HepG2 (cell line): ENCODE measurements at regions of chr2 and their contacts with region 1.

Region 1: DNA sequence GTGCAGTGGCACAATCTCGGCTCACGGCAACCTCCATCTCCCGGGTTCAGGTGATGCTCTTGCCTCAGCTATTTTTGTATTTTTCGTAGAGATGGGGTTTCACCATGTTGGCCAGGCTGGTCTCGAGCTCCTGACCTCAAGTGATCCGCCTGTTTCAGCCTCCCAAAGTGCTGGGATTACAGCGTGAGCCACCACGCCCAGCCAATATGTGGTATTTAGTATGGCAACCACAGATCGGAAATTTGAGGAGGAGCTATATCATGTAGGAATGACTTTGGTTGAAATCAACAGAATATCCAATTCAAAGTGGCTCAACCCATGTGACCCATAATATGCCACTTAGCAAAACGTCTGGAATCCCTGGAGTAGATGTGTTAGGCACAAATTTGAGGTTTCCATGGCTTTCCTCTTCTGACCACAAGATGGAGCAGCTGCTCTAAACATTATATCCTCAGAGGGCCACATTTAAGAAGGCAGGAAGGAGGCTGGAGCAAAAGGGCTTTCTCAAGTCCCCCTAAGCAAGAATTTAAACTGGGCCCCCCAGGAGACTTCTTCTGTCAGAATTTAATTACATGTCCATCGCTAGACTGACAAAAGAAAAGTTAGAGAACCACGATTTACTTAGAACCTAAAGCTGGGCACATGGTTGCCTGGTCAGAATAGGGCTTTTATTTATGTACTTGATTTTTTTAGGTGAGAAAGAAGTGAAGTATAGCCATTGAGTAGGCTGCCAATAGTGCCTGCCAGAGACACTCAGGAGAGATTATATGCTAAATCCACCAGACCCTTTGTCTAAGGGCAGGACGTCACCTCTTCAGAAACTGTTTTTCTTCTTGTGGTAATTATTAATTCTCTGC is 49.6 kb upstream of the ITSN2 start:
- DNase-seq: peak; percentile 71
- ATAC-seq: peak; percentile 89
- H3K4me3 ChIP-seq: no peak overlapping the region
- H3K27ac ChIP-seq: no peak overlapping the region
- H3K4me1 ChIP-seq: 0 out of 2 replicates have a peak, but pooled peaks cover 4% of the 10 kb centered on the region
- H3K27me3 ChIP-seq: no peaks in the 10 kb centered on the region
- CTCF ChIP-seq: peak; percentile 90
- EP300 ChIP-seq: no peak
- POLR2A ChIP-seq: no peak
- RAD21 ChIP-seq: peak; percentile 65

Region 2: GRCh38 chr2:24421668-24422067 is 11.7 kb after region 1 on chr2:
- CTCF ChIA-PET with region 1: no interaction called
- POLR2A ChIA-PET with region 1: no interaction called
- in situ Hi-C with region 1: no loop called
- intact Hi-C with region 1: no loop called
- DNase-seq: peak; percentile 52
- ATAC-seq: peak; percentile 88
- H3K4me3 ChIP-seq: no peak overlapping the region
- H3K27ac ChIP-seq: no peak overlapping the region
- H3K4me1 ChIP-seq: peaks cover 6% of the 10 kb centered on the region; the same call in 1 of the 2 replicates
- H3K27me3 ChIP-seq: 0 out of 5 replicates have a peak, but pooled peaks cover 0 to 4% of the 10 kb centered on the region in 2 experiments
- CTCF ChIP-seq: peak; percentile 82
- EP300 ChIP-seq: no peak
- POLR2A ChIP-seq: no peak
- RAD21 ChIP-seq: no peak; the same call in 1 of the 2 replicates

Region 3: DNA sequence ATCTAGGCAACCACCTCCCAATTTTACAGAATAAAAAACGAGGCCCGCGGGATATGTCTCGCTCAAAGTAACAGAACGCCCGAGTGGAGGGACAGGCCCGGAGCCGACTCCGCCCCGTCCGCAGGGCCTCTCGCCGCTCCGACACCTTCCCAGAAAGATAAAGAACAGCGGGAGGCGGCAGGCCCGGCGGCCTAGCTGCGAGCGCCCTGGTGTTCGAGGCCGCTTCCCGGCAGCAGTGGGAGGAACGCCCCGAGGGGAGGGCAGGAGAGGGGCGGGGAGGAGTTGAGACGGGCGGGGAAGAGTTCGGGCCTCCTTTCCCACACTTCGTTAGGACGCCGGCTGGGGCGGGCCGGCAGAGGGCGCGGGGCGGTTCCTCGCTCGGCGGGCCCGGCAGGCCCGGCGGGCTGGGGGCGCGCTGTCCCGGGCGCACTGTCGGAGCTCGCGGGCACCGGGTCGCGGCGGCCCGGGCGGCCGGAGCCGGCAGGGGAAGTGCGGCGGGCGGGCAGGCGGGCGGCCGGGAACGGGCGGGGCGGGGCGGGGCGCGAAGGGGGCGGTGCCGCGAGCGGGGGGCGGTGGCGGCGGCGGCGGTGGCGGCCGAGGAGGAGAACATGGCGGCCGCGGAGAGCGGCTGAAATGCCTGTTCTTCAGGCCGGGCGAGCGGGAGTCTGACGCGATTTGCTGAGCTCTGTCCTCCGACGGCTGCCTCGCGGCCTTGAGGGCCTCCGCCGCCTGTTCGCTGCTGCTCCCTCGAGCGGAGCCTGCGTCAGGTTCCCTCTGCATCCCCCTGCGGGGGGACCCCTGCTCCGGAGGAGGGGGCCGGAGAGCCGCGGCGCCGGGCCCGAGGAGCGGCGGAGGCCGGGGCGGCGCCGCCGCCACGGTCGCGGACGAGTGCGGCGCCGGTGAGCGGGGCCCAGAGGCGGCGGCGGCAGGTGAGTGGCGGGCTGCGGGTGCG is 81.0 kb after region 1 on chr2 and contains the start of gene NCOA1:
- CTCF ChIA-PET with region 1: no interaction called
- POLR2A ChIA-PET with region 1: no interaction called
- in situ Hi-C with region 1: no loop called
- intact Hi-C with region 1: loop called (anchors 5 kb)
- DNase-seq: peak; percentile 75
- ATAC-seq: peak; percentile 82
- H3K4me3 ChIP-seq: peak within 1 kb of the TSS; percentile 80 to 90 (median 89)
- H3K27ac ChIP-seq: peak within 1 kb of the TSS; percentile 58
- H3K4me1 ChIP-seq: peaks cover 49% of the 10 kb centered on the region
- H3K27me3 ChIP-seq: peaks cover 0 to 10% of the 10 kb centered on the region in 2 experiments; a peak in 2 of 5 replicates
- CTCF ChIP-seq: no peak; the same call in 1 of the 2 replicates
- EP300 ChIP-seq: no peak
- POLR2A ChIP-seq: peak; percentile 77 to 84
- RAD21 ChIP-seq: no peak
- total RNA-seq, gene NCOA1: 10.0 and 10.5 TPM in 2 replicates

Region 4: DNA sequence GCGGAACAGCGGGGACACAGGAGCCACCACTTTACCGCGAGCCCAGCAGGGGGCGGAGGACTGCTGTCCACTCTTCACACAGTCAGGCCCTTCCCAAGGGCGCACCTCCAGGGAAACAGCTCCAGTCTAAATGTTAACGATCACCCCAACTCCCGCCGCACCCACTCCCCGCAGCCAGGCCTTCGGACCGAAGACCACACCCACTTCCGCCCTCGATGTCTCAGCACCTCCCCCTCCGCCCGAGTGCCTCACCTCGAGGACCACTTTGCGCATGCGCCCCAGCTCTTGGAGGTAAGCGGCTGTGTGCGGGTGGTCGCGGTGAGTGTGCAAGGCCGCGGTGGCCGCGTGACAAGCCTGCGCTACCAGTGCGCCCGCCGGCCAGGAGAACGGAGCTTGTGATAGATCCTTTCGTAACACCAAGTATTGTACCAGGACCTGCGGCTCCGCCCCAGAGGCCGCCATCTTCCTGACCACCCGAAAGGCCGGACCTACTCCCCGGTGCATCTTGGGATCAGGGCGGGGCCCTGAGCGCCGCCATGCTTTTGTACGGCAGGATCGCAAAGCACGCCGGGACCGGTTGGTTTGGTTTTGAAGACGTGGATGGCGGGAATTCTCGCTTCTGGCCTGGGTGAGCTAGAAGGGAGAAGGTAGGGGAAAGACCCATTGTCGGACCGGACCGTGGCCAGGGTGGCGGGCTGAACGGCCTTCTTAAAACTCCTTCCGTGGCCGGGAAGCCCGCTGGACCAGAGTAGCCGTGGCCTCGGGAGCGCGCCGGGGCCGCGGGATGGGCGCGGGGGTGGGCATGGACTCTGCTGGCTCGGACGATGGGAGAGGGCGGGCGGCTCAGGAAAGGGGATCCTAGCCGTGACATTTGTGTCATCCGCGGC is 383.2 kb after region 1 on chr2 and contains the starts of genes CENPO and PTRHD1:
- CTCF ChIA-PET with region 1: interaction called, 4 read pairs
- POLR2A ChIA-PET with region 1: no interaction called
- in situ Hi-C with region 1: no loop called
- intact Hi-C with region 1: loop called (anchors 1 kb)
- DNase-seq: peak; percentile 98
- ATAC-seq: peak; percentile 93
- H3K4me3 ChIP-seq: peak within 1 kb of the TSS; percentile 85 to 95 (median 86)
- H3K27ac ChIP-seq: peak within 1 kb of the TSS; percentile 94
- H3K4me1 ChIP-seq: peaks cover 46% of the 10 kb centered on the region
- H3K27me3 ChIP-seq: no peaks in the 10 kb centered on the region; a peak in 1 of 5 replicates
- CTCF ChIP-seq: peak; percentile 97
- EP300 ChIP-seq: peak in 1 of 2 experiments; percentile 19; a peak in 1 of 4 replicates
- POLR2A ChIP-seq: peak; percentile 72 to 96
- RAD21 ChIP-seq: peak; percentile 91
- total RNA-seq, gene CENPO: 35.5 and 41.4 TPM in 2 replicates
- total RNA-seq, gene PTRHD1: 69.1 and 72.6 TPM in 2 replicates

Region 5: DNA sequence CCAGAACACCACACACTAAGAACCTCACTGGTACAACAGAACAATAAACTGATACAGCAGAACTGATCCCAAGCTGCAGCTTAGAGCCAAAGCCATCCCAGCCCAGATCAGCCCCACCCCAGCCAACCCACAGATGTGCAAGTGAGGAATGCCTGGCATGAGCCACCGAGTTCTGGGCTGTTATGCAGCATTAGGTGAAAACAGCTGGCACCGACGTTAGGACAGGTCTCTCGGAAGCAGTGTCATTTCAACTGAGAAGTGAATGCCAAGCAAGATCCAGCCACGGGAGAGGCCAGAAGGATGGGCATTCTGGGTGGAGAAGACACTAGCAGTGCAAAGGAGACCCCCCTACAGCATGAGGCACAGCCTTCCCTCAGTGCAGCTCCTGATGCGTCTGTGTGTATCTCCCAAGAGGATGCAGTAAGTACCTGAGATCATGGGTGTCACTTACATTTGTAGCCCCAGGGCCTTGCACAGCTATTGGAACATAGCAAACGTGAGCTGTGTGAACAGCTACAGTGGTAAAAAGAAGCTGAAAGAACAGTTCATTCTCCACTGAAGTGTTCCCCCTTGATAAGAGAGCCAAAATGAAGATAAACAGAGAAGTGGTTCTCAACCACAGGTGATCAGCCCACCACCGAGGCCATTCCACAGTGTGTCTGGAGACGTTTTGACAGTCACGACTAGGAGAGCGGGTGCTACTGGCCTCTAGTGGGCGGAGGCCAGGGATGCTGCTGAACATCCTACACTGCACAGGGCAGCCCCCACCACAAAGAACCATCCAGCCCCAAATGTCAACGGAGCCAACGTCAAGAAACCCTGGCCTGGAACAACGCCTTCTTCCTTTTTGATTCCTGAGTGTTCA is 471.5 kb after region 1 on chr2:
- CTCF ChIA-PET with region 1: no interaction called
- POLR2A ChIA-PET with region 1: no interaction called
- in situ Hi-C with region 1: no loop called
- intact Hi-C with region 1: loop called (anchors 1 kb)
- DNase-seq: no peak
- ATAC-seq: peak; percentile 81
- H3K4me3 ChIP-seq: peak overlapping the region in 1 of 3 experiments; percentile 1; a peak in 1 of 6 replicates
- H3K27ac ChIP-seq: no peak overlapping the region
- H3K4me1 ChIP-seq: peaks cover 24% of the 10 kb centered on the region; the same call in 1 of the 2 replicates
- H3K27me3 ChIP-seq: peaks cover 0 to 9% of the 10 kb centered on the region in 2 experiments; a peak in 3 of 5 replicates
- CTCF ChIP-seq: peak; percentile 62
- EP300 ChIP-seq: no peak
- POLR2A ChIP-seq: no peak
- RAD21 ChIP-seq: 0 out of 2 replicates have a peak, but pooled peaks have one; percentile 25

Region 6: DNA sequence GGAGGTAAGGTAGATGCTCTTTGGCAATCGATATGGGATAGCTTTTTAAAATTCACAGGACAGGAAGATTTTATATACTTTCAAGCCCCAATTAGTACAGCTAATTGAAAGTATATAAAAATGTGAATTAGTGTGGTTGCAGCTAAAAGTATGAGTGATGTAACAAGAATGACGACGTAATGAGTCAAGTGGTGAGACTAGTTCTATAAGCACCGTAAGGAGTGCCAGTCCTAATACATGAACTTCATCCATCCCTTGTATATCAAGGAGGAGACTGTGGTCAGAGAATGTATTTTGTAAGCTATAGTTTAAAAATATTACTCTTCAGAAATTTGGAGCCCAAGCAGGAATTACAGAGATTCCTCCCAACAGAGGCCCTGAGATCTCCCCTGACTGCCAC is 536.0 kb after region 1 on chr2:
- CTCF ChIA-PET with region 1: no interaction called
- POLR2A ChIA-PET with region 1: no interaction called
- in situ Hi-C with region 1: no loop called
- intact Hi-C with region 1: no loop called
- DNase-seq: no peak
- ATAC-seq: no peak
- H3K4me3 ChIP-seq: no peak overlapping the region
- H3K27ac ChIP-seq: no peak overlapping the region
- H3K4me1 ChIP-seq: no peaks in the 10 kb centered on the region
- H3K27me3 ChIP-seq: no peaks in the 10 kb centered on the region
- CTCF ChIP-seq: no peak
- EP300 ChIP-seq: no peak
- POLR2A ChIP-seq: no peak
- RAD21 ChIP-seq: no peak